MCF 10A (cell line): ENCODE measurements at regions of chr1 and their contacts with region 1.

Region 1: DNA sequence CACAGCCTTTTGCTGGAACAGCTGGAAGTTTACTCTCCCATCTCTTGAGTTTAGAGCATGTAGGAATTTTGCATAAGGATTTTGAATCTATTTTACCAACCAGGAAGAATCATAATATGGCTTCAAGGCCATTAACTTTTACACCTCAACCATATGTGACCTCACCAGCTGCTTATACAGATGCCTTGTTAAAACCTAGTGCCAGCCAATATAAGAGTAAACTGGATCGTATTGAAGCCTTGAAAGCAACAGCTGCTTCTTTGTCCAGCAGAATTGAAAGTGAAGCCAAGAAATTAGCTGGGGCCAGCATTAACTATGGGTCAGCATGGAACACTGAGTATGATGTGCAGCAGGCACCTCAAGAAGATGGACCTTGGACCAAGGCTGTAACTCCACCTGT is 65.4 kb downstream of the CEP350 start:
- DNase-seq: no peak
- H3K4me3 Mint-ChIP-seq: no peak overlapping the region
- H3K27ac Mint-ChIP-seq: no peak overlapping the region
- H3K4me1 Mint-ChIP-seq: no peaks in the 10 kb centered on the region
- H3K27me3 Mint-ChIP-seq: no peaks in the 10 kb centered on the region
- CTCF ChIP-seq: no peak

Region 2: GRCh38 chr1:180033390-180033789 is 13.4 kb after region 1 on chr1:
- CTCF ChIA-PET with region 1: interaction called, 4 read pairs
- POLR2A ChIA-PET with region 1: interaction called, 13 read pairs
- intact Hi-C with region 1: no loop called
- DNase-seq: no peak
- H3K4me3 Mint-ChIP-seq: no peak overlapping the region
- H3K27ac Mint-ChIP-seq: no peak overlapping the region
- H3K4me1 Mint-ChIP-seq: peaks cover 13% of the 10 kb centered on the region
- H3K27me3 Mint-ChIP-seq: no peaks in the 10 kb centered on the region
- CTCF ChIP-seq: no peak